OCI-LY7 (cell line): ENCODE measurements at regions of chr1 and their contacts with region 1.

Region 1: DNA sequence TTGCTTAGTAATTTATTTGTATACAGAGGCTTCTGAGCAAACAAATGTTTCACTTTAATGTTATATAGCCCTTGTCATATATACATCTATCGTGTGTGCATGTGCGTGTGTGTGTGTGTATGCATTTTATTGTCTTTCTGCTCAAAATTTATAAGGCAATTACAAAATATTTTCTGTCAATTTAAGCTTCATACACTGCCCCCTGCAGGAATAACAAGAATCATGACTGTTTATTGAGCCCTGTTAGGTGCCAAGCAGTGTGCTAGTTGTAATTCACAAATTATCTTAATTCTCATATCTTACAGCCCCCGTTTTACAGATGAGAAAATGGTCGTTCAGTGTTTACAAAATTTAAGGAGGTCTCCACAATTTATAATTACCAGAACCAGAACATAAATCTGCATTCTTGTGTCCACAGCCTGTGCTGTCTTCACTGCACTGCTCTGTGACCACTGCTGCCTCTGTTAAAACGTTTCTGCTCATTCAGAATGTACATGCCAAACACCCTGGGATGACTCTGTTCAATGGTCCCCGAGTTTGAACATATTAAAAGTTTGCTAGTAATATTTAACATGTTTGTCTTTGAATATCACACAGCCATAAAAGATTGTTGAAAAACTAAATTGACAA is 181.3 kb downstream of the ATP6V1G3 start:
- DNase-seq: peak; percentile 25
- H3K4me3 ChIP-seq: no peak overlapping the region
- H3K27ac ChIP-seq: no peak overlapping the region
- H3K4me1 ChIP-seq: no peaks in the 10 kb centered on the region
- CTCF ChIP-seq: peak; percentile 82

Region 2: GRCh38 chr1:198088360-198089071 is 270.6 kb before region 1 on chr1:
- CTCF ChIA-PET with region 1: no interaction called
- POLR2A ChIA-PET with region 1: no interaction called
- intact Hi-C with region 1: loop called (anchors 5 kb)
- DNase-seq: peak; percentile 47
- H3K4me3 ChIP-seq: no peak overlapping the region
- H3K27ac ChIP-seq: no peak overlapping the region
- H3K4me1 ChIP-seq: no peaks in the 10 kb centered on the region
- CTCF ChIP-seq: peak; percentile 89

Region 3: DNA sequence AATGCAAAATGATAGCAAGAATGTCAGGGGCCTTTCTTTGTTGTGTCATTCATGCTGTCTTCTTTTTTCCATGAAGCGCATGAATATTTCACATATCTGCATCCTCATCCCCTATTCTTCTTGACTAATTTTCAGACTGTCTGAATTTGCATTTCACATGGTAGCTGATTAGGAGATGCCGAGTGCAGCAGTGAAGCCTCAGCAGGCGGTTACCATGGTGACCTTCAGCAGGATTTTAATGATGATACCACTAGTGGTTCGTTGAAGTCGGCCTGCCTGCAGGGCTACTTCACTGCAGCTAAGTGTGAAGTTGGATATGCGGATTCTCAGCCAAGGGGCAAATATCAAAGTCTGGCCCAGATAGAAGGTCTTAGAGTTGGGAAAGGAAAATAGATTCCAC is 60.5 kb before region 1 on chr1:
- CTCF ChIA-PET with region 1: no interaction called
- POLR2A ChIA-PET with region 1: no interaction called
- intact Hi-C with region 1: no loop called
- DNase-seq: no peak
- H3K4me3 ChIP-seq: no peak overlapping the region
- H3K27ac ChIP-seq: no peak overlapping the region
- H3K4me1 ChIP-seq: no peaks in the 10 kb centered on the region
- CTCF ChIP-seq: no peak